Activated CD8-positive, alpha-beta T cell treated with anti-CD3 and anti-CD28 coated beads, Interleukin-2, amount 10 ng/mL, durations not matched to agents 7 days and 5 days (primary cell): ENCODE measurements at regions of chr12 and their contacts with region 1.

Region 1: DNA sequence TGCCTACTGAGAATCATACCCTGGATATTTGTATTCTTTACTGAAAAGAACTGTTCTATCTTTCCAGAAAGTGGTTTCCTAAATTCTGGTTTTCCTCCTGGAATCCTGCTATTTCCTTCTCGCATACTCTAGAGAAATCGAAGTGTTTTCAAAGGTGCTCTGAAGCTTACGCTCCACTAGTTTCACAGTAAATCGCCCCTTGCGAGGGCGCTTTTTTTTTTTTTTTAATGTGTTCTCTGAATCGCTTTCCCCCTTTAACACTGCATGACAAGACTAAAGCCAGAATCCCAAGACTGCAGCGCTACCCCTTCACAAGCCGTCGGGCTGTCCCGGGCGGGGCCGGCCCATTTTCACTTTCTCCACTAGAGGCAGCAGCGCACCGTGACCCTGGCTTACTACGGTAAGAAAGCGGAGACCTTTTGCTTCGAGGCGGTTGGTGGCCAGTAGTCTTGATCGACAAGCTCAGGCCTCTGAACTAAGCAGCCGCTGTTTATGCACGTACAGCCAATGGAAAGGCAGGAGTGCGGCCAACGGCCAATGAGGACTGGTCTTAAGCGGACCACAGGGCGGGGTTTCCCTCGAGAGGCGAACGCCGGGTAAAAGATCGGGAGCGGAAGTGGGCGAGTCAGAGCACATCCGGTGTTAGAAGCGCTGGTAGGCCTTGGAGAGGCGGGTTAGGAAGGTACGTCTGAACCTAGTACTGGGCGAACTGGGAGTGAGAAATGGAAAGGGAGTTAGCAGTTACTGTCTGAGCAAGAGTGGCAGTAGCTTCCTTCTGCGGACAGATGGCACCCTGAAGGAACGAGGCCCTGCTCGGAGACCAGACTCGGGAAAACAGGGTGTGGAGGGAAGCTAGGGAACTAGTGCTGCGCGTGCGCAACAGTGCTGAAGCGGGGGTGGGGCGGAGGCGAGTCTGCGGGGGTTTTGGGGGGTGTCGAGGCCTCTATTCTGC is at the start of gene TMBIM6:
- DNase-seq: peak; percentile 100
- ATAC-seq: peak; percentile 94
- H3K4me3 Mint-ChIP-seq: peak within 1 kb of the TSS; percentile 85
- H3K27ac Mint-ChIP-seq: peak within 1 kb of the TSS; percentile 97
- H3K4me1 Mint-ChIP-seq: peaks cover 28% of the 10 kb centered on the region
- H3K27me3 Mint-ChIP-seq: no peaks in the 10 kb centered on the region
- total RNA-seq, gene TMBIM6: 420 TPM

Region 2: DNA sequence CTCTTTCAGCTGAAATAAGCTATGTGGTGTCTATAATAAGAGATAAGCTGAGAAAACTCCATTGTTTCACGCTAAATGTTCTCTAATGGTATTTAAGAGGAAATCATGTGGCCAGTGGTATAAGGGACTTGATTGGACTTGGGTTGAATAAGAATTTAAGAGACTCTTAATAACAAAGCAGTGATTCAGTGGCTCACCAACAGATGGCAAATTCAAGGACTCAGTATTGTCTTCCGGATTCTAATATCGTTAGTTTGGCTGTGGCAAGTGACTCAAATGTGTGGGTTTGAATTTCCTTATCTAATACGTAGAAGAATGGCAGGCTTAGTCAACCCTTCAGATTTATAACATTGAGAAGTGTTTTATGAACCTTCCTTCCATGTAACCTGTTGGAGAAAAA is 251.5 kb before region 1 on chr12:
- CTCF ChIA-PET with region 1: no interaction called
- POLR2A ChIA-PET with region 1: no interaction called
- DNase-seq: no peak
- ATAC-seq: no peak
- H3K4me3 Mint-ChIP-seq: no peak overlapping the region
- H3K27ac Mint-ChIP-seq: no peak overlapping the region
- H3K4me1 Mint-ChIP-seq: no peaks in the 10 kb centered on the region
- H3K27me3 Mint-ChIP-seq: no peaks in the 10 kb centered on the region

Region 3: DNA sequence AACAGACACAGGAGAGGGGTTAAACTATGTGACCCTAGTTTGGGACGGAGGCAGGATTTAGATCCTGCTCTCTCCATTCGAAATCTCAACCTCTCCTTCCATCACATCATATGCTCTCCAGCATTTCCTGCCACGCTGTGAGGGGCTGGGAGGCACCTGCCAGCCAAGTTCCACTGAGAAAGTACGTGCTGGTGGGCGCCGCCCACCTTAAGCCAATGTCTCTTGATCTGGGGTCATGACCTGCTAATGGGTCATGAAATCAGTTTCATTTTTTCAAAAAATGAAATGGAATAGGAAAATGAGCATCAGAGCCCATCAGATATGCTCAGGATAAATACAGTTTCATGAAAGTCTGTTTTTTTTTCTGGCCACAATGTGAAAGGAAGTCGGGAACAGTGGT is 180.5 kb before region 1 on chr12:
- CTCF ChIA-PET with region 1: no interaction called
- POLR2A ChIA-PET with region 1: no interaction called
- DNase-seq: no peak
- ATAC-seq: no peak
- H3K4me3 Mint-ChIP-seq: peak overlapping the region; percentile 9
- H3K27ac Mint-ChIP-seq: peak overlapping the region; percentile 69
- H3K4me1 Mint-ChIP-seq: peaks cover 60% of the 10 kb centered on the region
- H3K27me3 Mint-ChIP-seq: no peaks in the 10 kb centered on the region

Region 4: GRCh38 chr12:49623142-49623904 is 117.9 kb before region 1 on chr12 and contains the start of gene PRPF40B:
- CTCF ChIA-PET with region 1: interaction called, 16 read pairs
- POLR2A ChIA-PET with region 1: interaction called, 9 read pairs
- DNase-seq: peak; percentile 87
- ATAC-seq: peak; percentile 88
- H3K4me3 Mint-ChIP-seq: peak within 1 kb of the TSS; percentile 82
- H3K27ac Mint-ChIP-seq: peak within 1 kb of the TSS; percentile 89
- H3K4me1 Mint-ChIP-seq: peaks cover 29% of the 10 kb centered on the region
- H3K27me3 Mint-ChIP-seq: peaks cover 16% of the 10 kb centered on the region
- total RNA-seq, gene PRPF40B: 14.4 to 14.6 TPM

Region 5: DNA sequence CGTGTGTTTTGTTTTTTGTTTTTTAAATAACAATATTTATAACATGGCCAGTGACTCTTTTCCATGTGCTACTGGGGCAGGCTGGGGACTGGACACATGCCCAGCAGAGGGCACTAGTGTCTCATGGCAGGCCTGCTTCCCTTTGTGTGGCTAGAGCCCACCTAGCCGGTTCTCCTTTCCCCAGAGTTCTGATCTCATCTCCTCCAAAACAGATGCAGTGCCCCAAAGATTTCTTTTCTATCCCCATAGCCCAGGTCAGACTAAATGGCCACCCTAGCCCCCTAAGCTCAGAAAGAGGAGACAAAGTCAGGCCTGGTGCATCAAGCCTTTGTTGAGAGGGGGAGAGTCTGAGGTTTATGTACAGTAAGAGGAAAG is 96.6 kb before region 1 on chr12:
- CTCF ChIA-PET with region 1: interaction called, 31 read pairs
- POLR2A ChIA-PET with region 1: interaction called, 17 read pairs
- DNase-seq: peak; percentile 89
- ATAC-seq: peak; percentile 96
- H3K4me3 Mint-ChIP-seq: no peak overlapping the region
- H3K27ac Mint-ChIP-seq: peak overlapping the region; percentile 87
- H3K4me1 Mint-ChIP-seq: peaks cover 41% of the 10 kb centered on the region
- H3K27me3 Mint-ChIP-seq: no peaks in the 10 kb centered on the region

Region 6: DNA sequence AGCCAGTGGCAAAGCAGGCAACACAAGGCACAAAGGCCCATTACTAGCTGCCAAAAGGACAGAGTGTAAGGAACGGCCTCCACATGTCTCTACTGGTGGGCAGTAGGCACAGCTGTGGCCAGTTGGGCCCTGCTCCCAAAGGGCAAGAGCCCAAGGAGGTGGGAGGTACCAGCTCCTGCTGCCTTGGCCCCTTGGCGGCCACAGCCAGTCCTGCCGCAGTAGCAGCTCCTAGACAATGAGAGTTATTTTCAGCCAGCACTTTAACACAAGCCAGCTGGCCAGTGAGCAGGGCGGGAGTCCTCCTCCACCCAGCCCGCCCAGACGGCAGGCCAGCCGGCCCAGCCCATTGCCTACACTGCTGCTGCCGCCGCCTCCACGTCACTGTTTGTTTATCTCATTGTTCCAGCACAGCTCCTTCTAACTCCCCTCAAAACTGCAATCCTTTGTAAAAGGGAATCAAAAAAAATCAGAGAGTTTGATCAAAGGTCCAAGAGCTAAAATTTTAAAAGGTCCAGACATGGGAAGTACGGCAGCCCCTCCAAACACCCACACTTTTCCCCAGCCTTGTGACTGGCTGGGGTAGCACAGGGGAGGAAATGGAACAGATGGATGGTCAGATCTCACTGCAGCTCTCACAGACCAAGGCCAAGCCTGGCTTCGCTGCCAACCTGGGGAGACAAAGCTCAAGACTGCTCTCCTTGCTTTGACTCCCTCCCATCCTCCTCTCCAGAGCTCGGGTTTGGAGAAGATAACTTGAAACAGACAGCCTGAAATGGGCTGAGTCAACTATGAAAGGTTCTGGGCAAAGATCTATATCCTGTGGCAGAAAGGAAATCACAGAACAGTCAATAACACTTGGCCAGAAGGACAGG is 67.5 kb before region 1 on chr12:
- CTCF ChIA-PET with region 1: interaction called, 7 read pairs
- POLR2A ChIA-PET with region 1: interaction called, 10 read pairs
- DNase-seq: no peak
- ATAC-seq: no peak
- H3K4me3 Mint-ChIP-seq: no peak overlapping the region
- H3K27ac Mint-ChIP-seq: peak overlapping the region; percentile 69
- H3K4me1 Mint-ChIP-seq: peaks cover 76% of the 10 kb centered on the region
- H3K27me3 Mint-ChIP-seq: no peaks in the 10 kb centered on the region

Region 7: GRCh38 chr12:49763006-49763591 is 21.9 kb after region 1 on chr12:
- CTCF ChIA-PET with region 1: interaction called, 117 read pairs
- POLR2A ChIA-PET with region 1: interaction called, 57 read pairs
- DNase-seq: peak; percentile 85
- ATAC-seq: peak; percentile 74
- H3K4me3 Mint-ChIP-seq: peak overlapping the region; percentile 42
- H3K27ac Mint-ChIP-seq: peak overlapping the region; percentile 94
- H3K4me1 Mint-ChIP-seq: peaks cover 60% of the 10 kb centered on the region
- H3K27me3 Mint-ChIP-seq: no peaks in the 10 kb centered on the region

Region 8: GRCh38 chr12:49828133-49829091 is 87.2 kb after region 1 on chr12 and contains the start of gene NCKAP5L:
- CTCF ChIA-PET with region 1: interaction called, 12 read pairs
- POLR2A ChIA-PET with region 1: interaction called, 10 read pairs
- DNase-seq: peak; percentile 96
- ATAC-seq: peak; percentile 97
- H3K4me3 Mint-ChIP-seq: peak within 1 kb of the TSS; percentile 94
- H3K27ac Mint-ChIP-seq: peak within 1 kb of the TSS; percentile 94
- H3K4me1 Mint-ChIP-seq: peaks cover 27% of the 10 kb centered on the region
- H3K27me3 Mint-ChIP-seq: no peaks in the 10 kb centered on the region
- total RNA-seq, gene NCKAP5L: 7.2 to 7.7 TPM

Region 9: GRCh38 chr12:49893753-49894752 is 152.8 kb after region 1 on chr12:
- CTCF ChIA-PET with region 1: no interaction called
- POLR2A ChIA-PET with region 1: no interaction called
- DNase-seq: no peak
- ATAC-seq: no peak
- H3K4me3 Mint-ChIP-seq: no peak overlapping the region
- H3K27ac Mint-ChIP-seq: no peak overlapping the region
- H3K4me1 Mint-ChIP-seq: no peaks in the 10 kb centered on the region
- H3K27me3 Mint-ChIP-seq: peaks cover 9% of the 10 kb centered on the region